ENCODE measurements at regions of chr13 and their contacts with region 1.

Region 1: DNA sequence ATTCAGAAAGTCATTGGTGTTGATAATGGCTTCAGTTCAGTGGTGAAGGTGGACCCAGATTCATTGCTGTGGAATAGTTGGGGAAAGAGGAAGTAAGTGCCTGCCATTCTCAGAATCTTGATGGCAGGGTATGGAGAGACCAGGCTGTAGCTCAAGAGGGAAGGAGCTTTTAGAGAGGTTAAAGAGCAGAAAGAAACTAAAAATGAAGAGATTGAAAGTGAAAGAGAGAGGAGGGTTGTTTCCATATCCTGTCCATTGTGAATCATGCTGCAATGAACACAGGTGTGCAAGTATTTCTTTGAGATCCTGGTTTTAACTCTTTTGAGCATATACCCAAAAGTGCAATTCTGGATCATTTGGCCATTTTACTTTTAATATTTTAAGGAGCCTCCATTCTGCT is 12.5 kb downstream of the GJB6 start:
- DNase-seq: no peak
- ATAC-seq: peak in 2 of 4 experiments; percentile 31 to 35
- H3K4me3 ChIP-seq: no peak overlapping the region
- H3K4me3 Mint-ChIP-seq: peak overlapping the region in 2 of 3 donors; percentile 11 to 47
- H3K27ac ChIP-seq: no peak overlapping the region
- H3K27ac Mint-ChIP-seq: peak overlapping the region; percentile 33 to 88
- H3K4me1 ChIP-seq: no peaks in the 10 kb centered on the region
- H3K4me1 Mint-ChIP-seq: peaks cover 12 to 20% (median 16%) of the 10 kb centered on the region in 3 donors
- H3K27me3 ChIP-seq: peaks cover 0 to 2% of the 10 kb centered on the region in 2 experiments
- H3K27me3 Mint-ChIP-seq: peaks cover 0 to 1% of the 10 kb centered on the region in 2 donors

Region 2: DNA sequence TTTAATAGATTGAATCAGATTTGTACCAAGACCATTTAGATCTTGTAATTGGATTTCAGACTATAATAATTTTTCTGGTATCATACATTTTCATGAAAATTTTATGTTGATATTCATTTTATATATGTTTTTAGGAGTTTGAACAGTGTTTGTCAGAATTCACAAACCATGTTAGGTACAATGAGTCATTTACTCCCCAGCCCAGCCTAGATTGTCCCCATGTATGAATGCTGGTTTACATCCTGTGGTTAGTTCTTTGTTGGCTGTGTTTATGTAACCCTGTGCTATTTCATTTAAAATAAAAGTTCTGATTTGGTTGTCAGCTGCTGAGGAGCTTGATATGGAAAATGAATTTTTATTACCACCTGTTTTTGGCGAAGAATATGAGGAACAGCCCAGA is 155.4 kb before region 1 on chr13:
- CTCF ChIA-PET with region 1: no interaction called
- POLR2A ChIA-PET with region 1: interaction called in 1 of 2 experiments, 11 read pairs
- DNase-seq: no peak
- ATAC-seq: no peak
- H3K4me3 ChIP-seq: no peak overlapping the region
- H3K4me3 Mint-ChIP-seq: no peak overlapping the region
- H3K27ac ChIP-seq: no peak overlapping the region
- H3K27ac Mint-ChIP-seq: no peak overlapping the region
- H3K4me1 ChIP-seq: no peaks in the 10 kb centered on the region
- H3K4me1 Mint-ChIP-seq: no peaks in the 10 kb centered on the region
- H3K27me3 ChIP-seq: no peaks in the 10 kb centered on the region
- H3K27me3 Mint-ChIP-seq: no peaks in the 10 kb centered on the region

Region 3: DNA sequence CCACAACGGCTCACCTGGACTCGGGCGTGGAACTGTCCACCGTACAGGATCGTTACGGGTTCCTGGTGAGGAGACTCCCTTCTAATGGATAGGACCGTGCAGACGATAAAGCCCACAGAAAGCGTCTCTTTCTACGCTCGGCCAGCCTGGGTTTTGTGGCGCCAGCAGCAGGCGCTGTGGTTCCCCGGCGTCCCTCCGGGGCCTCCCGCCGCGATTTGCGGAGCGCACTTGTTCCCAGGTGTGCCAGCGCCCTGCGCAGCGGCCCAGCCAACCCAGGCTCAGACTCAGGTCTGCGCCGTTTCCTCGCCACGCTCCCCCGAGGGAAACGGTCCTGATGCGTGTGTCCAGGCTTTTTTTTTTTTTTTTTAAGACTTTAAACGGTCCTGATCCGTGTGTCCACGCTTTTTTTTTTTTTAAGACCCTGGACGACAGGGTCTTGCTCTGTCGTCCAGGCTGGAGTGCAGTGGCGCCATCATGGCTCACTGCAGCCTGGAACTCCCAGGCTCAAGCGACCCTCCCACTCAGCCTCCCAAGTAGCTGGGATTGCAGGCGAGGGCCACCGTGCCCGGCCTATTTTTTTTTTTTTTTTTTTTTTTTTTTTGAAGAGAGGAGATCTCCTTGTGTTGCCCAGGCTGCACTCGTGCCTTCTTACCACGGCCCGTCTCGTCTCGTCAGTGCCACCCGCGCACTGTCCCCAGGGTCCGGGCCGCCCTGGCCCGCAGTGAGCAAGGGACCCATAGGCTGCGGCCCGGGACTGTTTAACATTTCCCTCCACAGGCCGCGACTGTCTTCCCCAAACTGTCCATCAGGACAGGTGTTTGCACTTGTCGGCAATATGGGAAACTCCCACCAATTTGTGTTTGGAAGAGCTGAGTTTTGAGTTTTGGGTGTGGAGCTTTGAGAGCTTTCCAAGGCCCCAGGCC is 82.5 kb before region 1 on chr13:
- CTCF ChIA-PET with region 1: no interaction called
- POLR2A ChIA-PET with region 1: no interaction called
- DNase-seq: peak in 10 of 35 experiments; percentile 22 to 52 (median 36)
- ATAC-seq: peak; percentile 57 to 79 (median 68)
- H3K4me3 ChIP-seq: no peak overlapping the region
- H3K4me3 Mint-ChIP-seq: peak overlapping the region in 1 of 3 donors; percentile 17
- H3K27ac ChIP-seq: no peak overlapping the region
- H3K27ac Mint-ChIP-seq: no peak overlapping the region
- H3K4me1 ChIP-seq: peaks cover 0 to 8% of the 10 kb centered on the region in 2 experiments
- H3K4me1 Mint-ChIP-seq: peaks cover 4 to 6% (median 5%) of the 10 kb centered on the region in 3 donors
- H3K27me3 ChIP-seq: peaks cover 0 to 52% of the 10 kb centered on the region in 2 experiments
- H3K27me3 Mint-ChIP-seq: peaks cover 30 to 54% of the 10 kb centered on the region in 2 donors

Region 4: DNA sequence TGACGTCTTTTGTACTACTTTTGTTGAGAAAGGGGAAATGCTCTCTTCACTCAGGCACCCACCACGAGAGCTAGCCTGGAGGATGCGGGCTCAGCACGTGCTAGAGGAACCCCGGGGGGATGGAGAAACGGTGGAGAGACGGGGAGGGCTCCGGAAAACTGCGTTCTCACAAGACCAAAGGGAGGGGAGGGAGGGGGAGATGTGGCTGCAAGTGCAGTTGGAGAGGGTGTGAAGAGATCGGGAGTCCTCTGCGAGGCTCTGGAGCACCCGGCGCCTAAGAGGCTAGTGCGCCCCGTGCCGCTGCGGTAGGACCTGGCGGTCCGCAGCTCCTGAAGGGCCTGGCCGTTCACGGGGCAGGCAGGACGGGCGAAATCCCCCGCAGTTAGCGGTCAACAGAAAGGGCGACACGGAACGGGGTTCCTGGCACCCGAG is 726.4 kb after region 1 on chr13:
- CTCF ChIA-PET with region 1: no interaction called
- POLR2A ChIA-PET with region 1: no interaction called
- DNase-seq: peak in 13 of 35 experiments; percentile 1 to 34 (median 6)
- ATAC-seq: peak in 3 of 4 experiments; percentile 20 to 44 (median 37)
- H3K4me3 ChIP-seq: peak overlapping the region in 1 of 2 donors; percentile 44
- H3K4me3 Mint-ChIP-seq: peak overlapping the region in 1 of 3 donors; percentile 42
- H3K27ac ChIP-seq: no peak overlapping the region
- H3K27ac Mint-ChIP-seq: no peak overlapping the region
- H3K4me1 ChIP-seq: peaks cover 0 to 8% of the 10 kb centered on the region in 2 experiments
- H3K4me1 Mint-ChIP-seq: peaks cover 9% of the 10 kb centered on the region in 3 donors
- H3K27me3 ChIP-seq: peaks cover 0 to 35% of the 10 kb centered on the region in 2 experiments
- H3K27me3 Mint-ChIP-seq: peaks cover 48 to 57% of the 10 kb centered on the region in 2 donors